Naive thymus-derived CD4-positive, alpha-beta T cell (primary cell): ENCODE measurements at regions of chr3 and their contacts with region 1.

Region 1: DNA sequence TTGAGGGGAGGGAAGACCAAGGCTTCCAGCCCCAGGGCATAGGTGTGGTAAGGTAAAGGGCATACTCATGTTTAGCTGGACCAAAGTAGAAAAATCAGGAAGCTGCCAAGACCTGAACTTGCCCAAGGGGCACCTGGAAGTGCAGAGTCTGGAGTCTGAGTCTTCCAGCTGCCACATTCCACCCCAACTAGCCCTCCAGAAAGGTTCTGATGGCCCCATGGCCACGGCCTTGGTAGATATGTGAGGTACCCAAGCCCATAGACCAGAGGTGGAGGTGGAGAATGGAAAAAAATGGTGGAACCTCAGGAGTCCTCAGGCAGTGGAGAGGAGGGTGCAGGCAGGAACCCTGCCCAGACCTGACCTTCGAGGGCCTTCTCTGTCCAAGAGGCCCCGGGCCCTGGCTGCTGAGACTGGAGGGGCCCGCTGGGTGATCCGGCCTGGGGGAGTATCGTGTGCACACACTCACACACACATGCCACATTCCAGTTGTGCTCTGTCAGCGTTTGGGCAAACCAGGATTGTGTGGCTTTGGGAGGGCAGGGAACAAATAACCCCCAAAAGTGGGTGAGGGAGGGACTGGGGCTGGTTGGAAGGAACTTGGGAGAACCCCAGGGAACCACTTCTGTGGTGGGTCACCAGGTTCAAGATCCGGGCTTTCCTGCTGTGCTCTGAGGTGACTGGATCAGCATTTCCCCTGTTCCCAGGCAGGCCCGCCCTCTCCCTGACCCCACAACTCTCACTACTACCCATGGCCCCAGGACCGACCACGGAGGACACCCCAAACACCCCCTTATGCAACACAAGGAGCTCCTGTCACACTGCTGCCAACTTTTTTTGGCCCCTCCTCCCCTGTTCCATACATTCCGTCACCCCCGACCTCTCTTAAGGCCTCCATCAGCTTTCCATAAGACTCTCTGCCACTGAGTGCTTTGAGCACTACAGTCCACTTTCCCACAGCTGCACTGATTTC is 11.6 kb downstream of the MYL3 start:
- DNase-seq: peak in 1 of 9 donors; percentile 9
- ATAC-seq: no peak
- H3K4me3 ChIP-seq: no peak overlapping the region
- H3K4me3 Mint-ChIP-seq: no peak overlapping the region
- H3K27ac ChIP-seq: no peak overlapping the region
- H3K27ac Mint-ChIP-seq: peak overlapping the region in 1 of 9 donors; percentile 31
- H3K4me1 ChIP-seq: peaks cover 0 to 2% of the 10 kb centered on the region in 2 donors
- H3K4me1 Mint-ChIP-seq: peaks cover 0 to 6% (median 0%) of the 10 kb centered on the region in 7 donors
- H3K27me3 ChIP-seq: no peaks in the 10 kb centered on the region
- H3K27me3 Mint-ChIP-seq: peaks cover 0 to 6% (median 0%) of the 10 kb centered on the region in 5 donors

Region 2: GRCh38 chr3:47370887-47371697 is 519.4 kb after region 1 on chr3:
- CTCF ChIA-PET with region 1: no interaction called
- POLR2A ChIA-PET with region 1: no interaction called
- intact Hi-C with region 1: loop called in 1 of 2 experiments (anchors 5 kb)
- DNase-seq: peak in 3 of 9 donors; percentile 7 to 20 (median 11)
- ATAC-seq: peak; percentile 40
- H3K4me3 ChIP-seq: no peak overlapping the region
- H3K4me3 Mint-ChIP-seq: no peak overlapping the region
- H3K27ac ChIP-seq: no peak overlapping the region
- H3K27ac Mint-ChIP-seq: peak overlapping the region in 1 of 9 donors; percentile 25
- H3K4me1 ChIP-seq: no peaks in the 10 kb centered on the region
- H3K4me1 Mint-ChIP-seq: peaks cover 0 to 12% (median 0%) of the 10 kb centered on the region in 7 donors
- H3K27me3 ChIP-seq: no peaks in the 10 kb centered on the region
- H3K27me3 Mint-ChIP-seq: peaks cover 0 to 9% (median 4%) of the 10 kb centered on the region in 5 donors